Adrenal gland (tissue), 19 donors: ENCODE measurements at regions of chr3 and their contacts with region 1.

Region 1: GRCh38 chr3:197906023-197906849 is 43.8 kb upstream of the RPL35A start:
- DNase-seq: peak; percentile 85 to 94 (median 92)
- H3K4me3 ChIP-seq: no peak overlapping the region
- H3K27ac ChIP-seq: peak overlapping the region in 1 of 5 donors; percentile 17
- H3K4me1 ChIP-seq: peaks cover 0 to 17% of the 10 kb centered on the region in 2 donors
- H3K27me3 ChIP-seq: no peaks in the 10 kb centered on the region
- CTCF ChIP-seq: peak; percentile 87 to 94 (median 93)
- POLR2A ChIP-seq: no peak

Region 2: GRCh38 chr3:197942956-197943556 is 36.8 kb after region 1 on chr3:
- intact Hi-C with region 1: loop called (anchors 5 kb)
- DNase-seq: peak in 2 of 7 donors; percentile 16 to 39
- H3K4me3 ChIP-seq: no peak overlapping the region
- H3K27ac ChIP-seq: no peak overlapping the region
- H3K4me1 ChIP-seq: no peaks in the 10 kb centered on the region
- H3K27me3 ChIP-seq: no peaks in the 10 kb centered on the region
- CTCF ChIP-seq: peak; percentile 59 to 73 (median 68)
- POLR2A ChIP-seq: no peak